ENCODE measurements at regions of chr11 and their contacts with region 1.

Region 1: DNA sequence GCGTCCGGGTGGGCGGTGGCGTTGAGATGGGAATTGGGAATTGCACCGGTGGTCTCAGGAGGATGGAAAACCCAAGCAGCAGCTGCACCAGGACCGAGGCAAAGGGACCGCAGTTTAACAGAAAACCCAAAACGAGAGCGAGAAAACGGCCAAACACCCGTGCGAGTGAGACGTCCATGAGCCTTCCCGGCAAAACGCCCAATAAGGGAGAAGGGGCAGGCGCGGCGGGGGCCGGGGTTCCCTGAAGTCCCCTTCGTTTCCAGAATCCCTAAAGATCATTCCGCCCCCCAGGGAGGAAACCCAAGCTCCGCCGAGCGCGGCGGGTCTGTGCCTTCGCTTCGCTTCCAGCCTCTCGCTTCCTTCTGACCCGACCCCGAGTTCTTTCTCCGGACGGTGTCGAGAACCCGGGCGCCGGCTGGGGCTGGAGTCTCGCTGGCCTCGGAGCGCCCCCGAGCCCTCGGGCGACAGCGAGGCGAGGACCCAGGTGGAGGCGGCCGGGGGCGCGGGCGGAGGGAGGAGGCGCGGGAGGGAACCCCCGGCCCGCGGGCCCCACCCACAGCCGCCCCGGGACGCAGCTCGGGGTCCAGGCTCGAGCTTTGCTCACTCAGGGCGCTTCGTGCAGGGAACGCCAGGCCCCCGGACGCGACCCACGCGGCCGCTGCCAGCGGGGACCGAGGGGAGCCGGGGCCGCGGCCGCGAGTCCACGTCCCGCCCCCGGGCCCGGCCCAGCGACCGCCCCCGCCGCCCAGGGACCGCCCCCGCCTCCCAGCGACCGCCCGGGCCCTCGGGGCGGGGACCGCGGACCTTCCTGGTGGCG is at the start of gene PGGHG:
- DNase-seq: peak in 1 of 2 experiments; percentile 75
- H3K4me3 ChIP-seq: peak within 1 kb of the TSS; percentile 34 to 59 (median 45)
- H3K27ac ChIP-seq: no peak within 1 kb of the TSS
- H3K4me1 ChIP-seq: peaks cover 0 to 42% (median 32%) of the 10 kb centered on the region in 4 experiments; a peak in 6 of 7 replicates
- H3K27me3 ChIP-seq: peaks cover 5 to 16% (median 13%) of the 10 kb centered on the region in 4 experiments; a peak in 6 of 7 replicates
- CTCF ChIP-seq: no peak
- EP300 ChIP-seq: no peak
- POLR2A ChIP-seq: no peak
- RAD21 ChIP-seq: no peak
- total RNA-seq, gene PGGHG: 52.9 and 60.7 TPM in 2 replicates

Region 2: GRCh38 chr11:299951-300735 is 11.6 kb after region 1 on chr11:
- CTCF ChIA-PET with region 1: interaction called, 29 read pairs
- POLR2A ChIA-PET with region 1: interaction called, 51 read pairs
- DNase-seq: no peak
- H3K4me3 ChIP-seq: no peak overlapping the region
- H3K27ac ChIP-seq: no peak overlapping the region
- H3K4me1 ChIP-seq: peaks cover 6 to 29% (median 15%) of the 10 kb centered on the region in 4 experiments
- H3K27me3 ChIP-seq: no peaks in the 10 kb centered on the region; a peak in 1 of 7 replicates
- CTCF ChIP-seq: peak in 2 of 3 experiments; percentile 11 to 51; a peak in 3 of 4 replicates
- EP300 ChIP-seq: no peak
- POLR2A ChIP-seq: peak in 1 of 2 experiments; percentile 34; a peak in 1 of 3 replicates
- RAD21 ChIP-seq: peak; percentile 12 to 42; a peak in 1 of 4 replicates

Region 3: DNA sequence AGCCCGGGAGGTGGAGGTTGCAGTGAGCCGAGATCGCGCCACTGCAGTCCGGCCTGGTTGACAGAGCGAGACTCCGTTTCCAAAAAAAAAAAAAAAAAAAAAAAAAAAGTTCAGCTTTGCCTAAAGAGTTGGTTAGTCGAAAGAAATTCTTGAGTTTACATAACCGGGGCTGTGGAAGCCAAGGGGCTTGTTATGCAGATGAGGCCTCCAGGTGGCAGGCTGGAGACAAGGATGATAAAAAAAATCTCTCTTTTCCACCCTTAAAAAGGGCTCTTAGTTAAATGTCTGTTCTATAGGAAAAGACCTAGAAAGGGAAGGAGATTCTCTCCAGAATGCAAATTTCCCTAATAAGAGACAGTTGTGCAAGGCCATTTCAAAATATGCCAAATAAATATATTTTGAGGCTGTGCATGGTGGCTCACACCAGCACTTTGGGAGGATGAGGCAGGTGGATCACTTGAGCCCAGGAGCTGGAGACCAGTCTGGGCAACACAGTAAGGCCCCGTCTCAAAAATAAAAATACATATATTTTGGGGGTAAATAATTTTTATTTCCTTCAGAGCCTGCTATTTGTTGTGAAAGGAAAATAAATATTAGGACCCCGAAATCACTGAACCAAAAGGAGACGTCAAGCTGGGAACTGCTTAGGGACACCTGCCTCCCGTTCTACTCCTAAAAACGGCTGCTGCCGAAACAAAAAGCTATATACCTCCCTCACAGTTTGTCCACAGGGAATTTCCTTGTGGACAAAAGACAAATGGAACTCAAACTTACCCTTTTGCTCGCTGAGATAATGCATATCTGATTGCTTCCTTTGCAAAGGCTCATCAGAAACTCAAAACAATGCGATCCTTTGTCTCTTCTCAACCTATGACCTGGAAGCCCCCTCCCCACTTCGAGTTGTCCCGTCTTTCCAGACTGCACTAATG is 16.6 kb after region 1 on chr11:
- CTCF ChIA-PET with region 1: interaction called, 29 read pairs
- POLR2A ChIA-PET with region 1: interaction called, 51 read pairs
- DNase-seq: no peak
- H3K4me3 ChIP-seq: peak overlapping the region in 2 of 4 experiments; percentile 3 to 42; a peak in 2 of 8 replicates
- H3K27ac ChIP-seq: peak overlapping the region; percentile 31; the same call in 1 of the 2 replicates
- H3K4me1 ChIP-seq: peaks cover 17 to 46% (median 33%) of the 10 kb centered on the region in 4 experiments
- H3K27me3 ChIP-seq: no peaks in the 10 kb centered on the region; a peak in 1 of 7 replicates
- CTCF ChIP-seq: peak; percentile 19 to 44 (median 31); a peak in 3 of 4 replicates
- EP300 ChIP-seq: no peak
- POLR2A ChIP-seq: no peak
- RAD21 ChIP-seq: peak; percentile 34 to 39

Measured in H1 (cell line).